ENCODE measurements at regions of chr15 and their contacts with region 1.

Region 1: DNA sequence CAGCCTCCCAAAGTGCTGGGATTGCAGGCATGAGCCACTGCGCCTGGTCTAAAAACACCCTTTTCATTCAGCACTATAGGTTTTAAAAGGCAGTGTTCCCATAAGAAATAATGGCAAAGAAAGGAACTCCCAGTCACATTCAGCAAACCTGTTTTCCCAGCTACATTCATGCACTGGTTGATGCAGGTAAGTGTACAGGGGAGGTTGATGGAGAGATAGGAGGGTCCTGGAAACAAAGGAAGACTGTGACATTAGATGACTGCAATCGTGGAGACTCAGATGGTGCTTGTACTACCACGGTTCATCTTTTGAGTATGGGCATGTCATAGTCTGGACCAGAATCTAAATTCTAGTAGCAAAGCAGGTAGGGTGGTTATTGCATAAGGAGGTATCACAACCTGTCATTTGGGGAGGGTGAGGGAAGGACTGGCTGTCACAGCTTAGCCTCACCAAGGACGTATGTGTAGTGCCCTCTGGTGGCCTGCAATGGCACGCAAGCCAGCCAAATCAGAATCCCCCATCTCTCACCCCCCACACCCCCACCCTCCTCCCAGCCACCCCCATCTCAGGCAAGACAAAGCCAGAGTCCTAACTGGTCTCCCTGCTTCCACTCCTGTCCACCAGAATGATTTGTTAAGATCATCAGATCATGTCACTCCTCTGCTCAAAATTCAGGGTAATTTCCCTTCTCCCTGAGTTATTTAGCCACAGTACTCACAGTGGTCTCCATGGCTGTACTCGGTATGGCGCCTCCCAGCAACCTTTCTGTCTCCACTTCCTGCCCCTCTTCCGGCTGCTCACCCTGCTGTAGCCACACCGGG is 28.8 kb upstream of the UBL7 start:
- DNase-seq: peak; percentile 51
- ATAC-seq: peak; percentile 43

Region 2: GRCh38 chr15:74326451-74327145 is 163.1 kb before region 1 on chr15:
- intact Hi-C with region 1: no loop called
- DNase-seq: no peak
- ATAC-seq: no peak

Region 3: GRCh38 chr15:74375303-74375693 is 114.4 kb before region 1 on chr15:
- intact Hi-C with region 1: loop called (anchors 5 kb)
- DNase-seq: peak; percentile 86
- ATAC-seq: peak; percentile 72

Measured in Right ventricle myocardium superior (tissue), 1 donor.